ENCODE measurements at regions of chr7 and their contacts with region 1.

Region 1: DNA sequence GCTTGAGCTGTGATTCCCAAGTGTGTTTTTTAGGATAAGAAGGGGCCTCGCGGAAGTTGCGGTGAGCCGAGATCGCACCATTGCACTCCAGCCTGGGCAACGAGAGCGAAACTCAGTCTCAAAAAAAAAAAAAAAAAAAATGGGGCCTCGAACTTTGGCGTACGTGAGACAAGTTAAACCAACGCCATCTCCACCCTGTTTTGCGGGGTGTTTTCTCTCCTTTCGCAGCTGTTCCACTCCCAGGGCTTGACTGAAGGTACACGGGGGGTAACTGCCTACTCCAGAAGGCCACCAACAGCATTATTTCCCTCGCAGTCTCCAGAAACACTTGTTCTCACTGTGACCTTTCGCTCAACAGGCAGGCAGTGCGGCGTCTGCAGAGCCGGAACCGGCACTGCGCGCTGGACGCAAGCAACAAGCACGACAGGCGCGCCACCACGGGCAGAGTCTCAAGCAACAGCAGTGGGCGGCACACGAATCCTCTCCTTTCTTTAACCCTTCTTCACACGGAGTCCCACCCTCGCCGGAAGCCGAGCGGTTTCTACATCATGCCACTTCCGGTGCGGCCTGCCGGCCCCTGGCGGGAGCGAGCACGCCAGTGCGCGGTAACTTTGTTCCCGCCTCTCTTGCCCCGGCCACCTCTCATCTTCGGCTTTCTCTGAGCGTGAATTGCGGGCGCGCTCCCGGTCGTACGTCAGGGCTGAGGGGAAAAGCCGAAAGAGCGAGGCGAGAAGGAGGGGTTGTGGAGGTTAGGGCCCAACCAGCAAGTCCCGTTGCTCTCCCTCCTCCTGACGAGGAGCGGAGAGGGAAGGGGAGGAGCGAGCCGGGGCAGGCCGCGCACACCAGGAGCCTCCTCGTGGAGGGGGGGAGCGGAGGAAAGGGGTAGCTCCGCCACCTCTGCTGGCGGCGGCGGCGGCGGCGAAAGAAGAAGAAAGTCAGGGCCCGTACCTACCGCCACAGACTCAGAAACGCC is 814 bp upstream of the CDK13 start:
- DNase-seq: peak; percentile 97 to 100 (median 99)
- H3K4me3 ChIP-seq: peak overlapping the region; percentile 75 to 98 (median 95)
- H3K4me3 Mint-ChIP-seq: peak overlapping the region; percentile 95 to 99
- H3K27ac ChIP-seq: peak overlapping the region; percentile 96
- H3K27ac Mint-ChIP-seq: peak overlapping the region; percentile 98 to 100 (median 100)
- H3K4me1 ChIP-seq: peaks cover 18 to 32% of the 10 kb centered on the region in 2 donors
- H3K4me1 Mint-ChIP-seq: peaks cover 30% of the 10 kb centered on the region
- H3K27me3 ChIP-seq: no peaks in the 10 kb centered on the region
- H3K27me3 Mint-ChIP-seq: peaks cover 0 to 2% (median 1%) of the 10 kb centered on the region in 3 donors
- CTCF ChIP-seq: no peak

Region 2: DNA sequence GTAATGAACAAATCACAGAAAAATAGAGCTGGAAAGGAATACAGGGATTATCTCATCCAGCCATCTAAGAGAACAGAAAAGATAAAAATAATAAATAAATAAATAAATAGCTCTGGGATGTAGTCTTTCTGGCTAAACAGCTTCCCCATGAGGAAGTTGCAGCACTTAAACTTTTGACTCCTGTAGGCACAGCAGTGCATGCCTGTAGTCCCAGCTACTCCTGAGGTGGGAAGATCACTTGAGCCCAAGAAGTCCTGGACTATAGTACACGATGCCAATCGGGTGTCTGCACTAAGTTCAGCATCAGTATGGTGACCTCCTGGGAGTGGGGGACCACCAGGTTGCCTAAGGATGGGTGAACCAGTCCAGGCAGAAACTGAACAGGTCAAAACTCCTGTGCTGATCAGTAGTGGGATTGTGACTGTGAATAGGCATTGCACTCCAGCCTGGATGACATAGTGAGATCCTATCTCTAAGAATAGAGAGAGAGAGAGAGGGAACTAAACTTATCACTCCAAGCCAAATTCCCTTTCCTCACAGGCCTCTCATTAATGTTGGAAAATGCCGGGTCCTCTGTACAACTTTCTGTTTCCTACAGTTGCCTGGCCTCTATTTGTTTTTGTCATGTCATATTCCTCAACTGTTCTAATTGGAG is 60.9 kb before region 1 on chr7:
- intact Hi-C with region 1: no loop called
- DNase-seq: no peak
- H3K4me3 ChIP-seq: no peak overlapping the region
- H3K4me3 Mint-ChIP-seq: no peak overlapping the region
- H3K27ac ChIP-seq: no peak overlapping the region
- H3K27ac Mint-ChIP-seq: no peak overlapping the region
- H3K4me1 ChIP-seq: no peaks in the 10 kb centered on the region
- H3K4me1 Mint-ChIP-seq: no peaks in the 10 kb centered on the region
- H3K27me3 ChIP-seq: no peaks in the 10 kb centered on the region
- H3K27me3 Mint-ChIP-seq: peaks cover 1 to 5% (median 3%) of the 10 kb centered on the region in 3 donors
- CTCF ChIP-seq: no peak

Region 3: GRCh38 chr7:40047661-40048060 is 98.4 kb after region 1 on chr7:
- intact Hi-C with region 1: loop called in 1 of 2 experiments (anchors 10 kb)
- DNase-seq: no peak
- H3K4me3 ChIP-seq: no peak overlapping the region
- H3K4me3 Mint-ChIP-seq: no peak overlapping the region
- H3K27ac ChIP-seq: no peak overlapping the region
- H3K27ac Mint-ChIP-seq: peak overlapping the region in 1 of 7 donors; percentile 15
- H3K4me1 ChIP-seq: peaks cover 11 to 18% of the 10 kb centered on the region in 2 donors
- H3K4me1 Mint-ChIP-seq: peaks cover 16% of the 10 kb centered on the region
- H3K27me3 ChIP-seq: no peaks in the 10 kb centered on the region
- H3K27me3 Mint-ChIP-seq: peaks cover 0 to 2% (median 1%) of the 10 kb centered on the region in 3 donors
- CTCF ChIP-seq: peak; percentile 28

Region 4: DNA sequence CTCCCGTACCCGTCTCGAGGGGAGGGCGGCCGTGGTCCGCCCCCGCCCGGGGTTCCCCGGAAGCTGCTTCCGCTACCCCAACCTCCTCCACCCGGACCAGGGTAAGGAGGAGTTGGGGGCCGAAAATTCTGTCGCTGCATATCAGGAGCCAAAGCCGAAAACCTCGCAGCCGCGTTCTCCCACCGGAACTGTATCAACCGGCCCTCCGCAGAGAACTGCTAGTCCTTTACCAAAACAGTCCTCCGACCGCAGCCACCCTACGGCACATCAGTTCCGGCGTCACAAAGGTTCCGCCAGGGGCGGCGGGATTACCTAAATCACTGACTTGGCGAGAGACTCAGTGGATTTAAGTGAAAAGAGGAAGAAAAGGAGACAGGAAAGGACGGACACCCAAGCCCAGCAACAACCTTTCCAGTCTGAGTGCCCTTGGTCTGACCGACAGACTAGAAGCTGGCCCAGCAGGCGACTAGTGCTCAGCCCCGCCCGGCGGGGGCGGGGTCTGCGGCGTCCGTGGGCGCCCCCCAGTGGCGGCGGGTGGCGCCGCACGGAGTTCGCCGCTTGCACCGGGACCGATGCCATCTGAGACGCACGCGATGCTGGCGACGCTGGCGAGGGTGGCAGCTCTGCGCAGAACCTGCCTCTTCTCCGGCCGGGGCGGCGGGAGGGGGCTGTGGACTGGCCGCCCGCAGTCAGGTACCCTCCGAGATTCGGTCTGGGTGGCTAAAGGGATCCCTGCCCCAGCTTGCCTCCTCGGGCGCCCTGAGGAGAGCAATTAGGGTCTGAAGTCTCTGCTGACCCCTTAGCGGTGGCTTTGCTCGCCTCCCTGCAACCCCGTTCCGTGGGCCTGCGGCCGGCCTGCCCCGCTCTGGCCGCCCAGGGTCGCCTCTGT is 185.4 kb after region 1 on chr7 and contains the starts of genes MPLKIP and SUGCT:
- intact Hi-C with region 1: loop called (anchors 10 kb)
- DNase-seq: peak; percentile 85 to 88 (median 86)
- H3K4me3 ChIP-seq: peak within 1 kb of the TSS; percentile 80 to 96 (median 81)
- H3K4me3 Mint-ChIP-seq: peak within 1 kb of the TSS; percentile 91 to 96
- H3K27ac ChIP-seq: peak within 1 kb of the TSS; percentile 83 to 94
- H3K27ac Mint-ChIP-seq: peak within 1 kb of the TSS; percentile 94 to 99 (median 97)
- H3K4me1 ChIP-seq: peaks cover 15 to 18% of the 10 kb centered on the region in 2 donors
- H3K4me1 Mint-ChIP-seq: peaks cover 24% of the 10 kb centered on the region
- H3K27me3 ChIP-seq: peaks cover 3 to 19% of the 10 kb centered on the region in 2 donors
- H3K27me3 Mint-ChIP-seq: peaks cover 16 to 27% (median 18%) of the 10 kb centered on the region in 3 donors
- CTCF ChIP-seq: peak; percentile 99
- polyA plus RNA-seq, gene MPLKIP: 17.4 to 71.8 (median 64.0) TPM
- polyA plus RNA-seq, gene SUGCT: not detected

Measured in CD14-positive monocyte (primary cell).